SK-N-SH (cell line): ENCODE measurements at regions of chr20 and their contacts with region 1.

Region 1: DNA sequence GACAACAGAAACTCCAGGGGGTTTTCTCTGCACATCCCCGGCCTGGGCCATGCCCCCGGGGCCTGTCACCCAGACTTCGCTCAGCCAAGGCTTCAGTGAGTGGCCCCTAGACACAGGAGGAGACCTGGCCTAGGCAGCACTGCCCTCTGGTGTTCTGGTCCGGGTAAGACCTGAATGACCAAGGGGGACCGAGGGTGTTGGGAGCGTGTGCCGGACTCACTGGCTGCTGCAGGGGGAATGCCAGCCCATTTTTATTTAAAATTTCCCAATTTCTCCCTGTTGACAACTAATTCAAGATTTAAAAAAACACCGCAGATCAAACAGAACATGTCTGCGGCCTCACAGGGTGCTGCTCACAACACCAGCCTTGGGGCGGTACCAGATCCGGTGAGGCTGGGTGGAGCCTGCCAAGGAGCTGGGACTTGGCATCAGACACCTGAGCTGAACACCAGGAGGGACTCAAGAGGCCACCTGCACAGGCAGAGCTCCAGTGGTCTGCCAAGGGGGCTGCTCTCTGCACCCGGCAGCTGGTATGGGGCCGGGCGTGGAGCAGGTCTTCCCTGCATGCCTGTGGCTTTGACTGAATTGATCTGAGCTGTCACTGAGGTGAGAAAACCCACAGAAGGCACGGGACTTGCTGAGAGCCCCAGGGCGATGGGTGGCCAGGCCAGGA is 47.8 kb downstream of the DSTN start:
- DNase-seq: peak; percentile 91
- H3K4me3 ChIP-seq: no peak overlapping the region
- H3K27ac ChIP-seq: no peak overlapping the region
- H3K4me1 ChIP-seq: no peaks in the 10 kb centered on the region
- H3K27me3 ChIP-seq: no peaks in the 10 kb centered on the region
- CTCF ChIP-seq: peak; percentile 72
- EP300 ChIP-seq: no peak
- RAD21 ChIP-seq: peak; percentile 92

Region 2: DNA sequence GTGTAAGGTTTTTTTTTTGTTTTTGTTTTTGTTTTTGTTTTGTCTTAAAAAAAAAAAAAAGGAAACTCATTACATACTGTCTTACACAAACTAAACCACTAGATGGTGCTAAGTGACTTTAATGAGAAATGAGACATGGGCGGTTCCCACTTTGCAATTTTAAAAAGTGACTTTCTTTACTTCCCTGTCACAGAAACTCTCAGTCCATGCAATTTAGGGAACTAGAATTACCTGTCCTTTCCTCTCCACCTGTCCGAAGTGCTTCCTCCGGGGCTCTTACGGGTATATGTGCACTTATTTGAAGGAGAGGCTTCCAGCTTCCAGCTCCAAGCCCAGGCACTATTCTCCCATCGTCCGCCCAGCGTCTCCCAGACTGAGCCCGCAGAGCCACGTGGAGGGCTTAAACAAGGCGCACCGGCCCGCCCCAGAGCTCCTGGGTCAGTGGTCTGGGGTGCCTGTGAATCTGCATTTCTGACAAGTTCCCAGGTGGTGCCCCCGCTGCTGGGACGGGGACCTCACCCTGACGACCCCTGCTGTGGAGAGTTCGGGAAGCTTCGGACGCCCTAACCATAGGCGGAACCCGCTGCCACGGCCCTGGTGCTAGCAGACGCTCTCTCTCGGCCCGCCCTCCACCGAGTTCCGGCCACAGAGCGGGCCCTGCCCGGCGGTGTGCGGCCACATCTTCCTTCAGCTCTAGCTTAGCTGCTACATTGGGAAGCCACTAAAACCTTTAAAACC is 112.6 kb before region 1 on chr20:
- CTCF ChIA-PET with region 1: interaction called, 36 read pairs
- POLR2A ChIA-PET with region 1: no interaction called
- DNase-seq: peak; percentile 59
- H3K4me3 ChIP-seq: peak overlapping the region; percentile 35 to 52
- H3K27ac ChIP-seq: no peak overlapping the region
- H3K4me1 ChIP-seq: peaks cover 0 to 9% of the 10 kb centered on the region in 2 experiments; a peak in 1 of 4 replicates
- H3K27me3 ChIP-seq: no peaks in the 10 kb centered on the region
- CTCF ChIP-seq: peak; percentile 71
- EP300 ChIP-seq: no peak
- RAD21 ChIP-seq: peak; percentile 83

Region 3: GRCh38 chr20:17536944-17537444 is 80.7 kb before region 1 on chr20:
- CTCF ChIA-PET with region 1: interaction called, 96 read pairs
- POLR2A ChIA-PET with region 1: no interaction called
- DNase-seq: peak; percentile 78
- H3K4me3 ChIP-seq: no peak overlapping the region; a peak in 1 of 4 replicates
- H3K27ac ChIP-seq: no peak overlapping the region
- H3K4me1 ChIP-seq: peaks cover 0 to 12% of the 10 kb centered on the region in 2 experiments; a peak in 3 of 4 replicates
- H3K27me3 ChIP-seq: no peaks in the 10 kb centered on the region
- CTCF ChIP-seq: peak; percentile 91
- EP300 ChIP-seq: no peak
- RAD21 ChIP-seq: peak; percentile 98

Region 4: DNA sequence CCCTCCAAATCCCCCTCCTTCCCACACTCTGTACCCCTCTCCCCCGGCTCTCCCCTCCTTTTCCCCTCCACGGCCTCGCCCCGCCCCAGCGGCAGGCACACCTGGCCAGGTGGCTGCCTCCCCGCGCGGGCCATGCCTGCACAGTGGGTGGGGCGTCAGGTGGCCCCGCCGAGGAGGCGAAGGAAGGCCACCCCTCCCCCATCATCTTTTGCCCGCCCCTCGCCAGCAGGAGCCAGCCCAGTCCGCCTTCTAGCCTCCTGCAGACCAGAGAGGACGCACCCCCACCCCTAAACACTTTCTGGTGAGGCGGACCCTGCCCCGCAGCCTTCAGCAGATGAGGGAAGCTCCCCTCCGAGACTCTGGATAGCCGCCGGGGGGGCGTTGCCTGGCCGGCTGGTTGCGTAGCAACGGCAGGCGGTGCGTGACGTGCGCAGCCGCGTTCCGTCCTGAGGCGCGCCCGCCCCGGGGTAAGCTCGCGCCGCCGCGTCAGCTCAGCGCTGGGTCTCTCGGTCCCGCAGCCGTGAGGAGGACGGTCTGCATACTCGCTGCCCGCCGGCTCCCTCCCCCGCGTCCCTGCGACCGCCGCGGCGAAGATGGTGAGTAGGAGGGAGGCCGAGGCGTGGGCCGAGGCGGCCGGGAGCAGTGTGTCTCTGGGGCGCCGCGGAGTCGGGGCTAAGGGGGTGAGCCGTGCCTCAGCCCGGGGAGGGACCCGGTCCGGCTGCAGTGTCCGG is 47.9 kb before region 1 on chr20 and contains the start of gene DSTN:
- CTCF ChIA-PET with region 1: interaction called, 16 read pairs
- POLR2A ChIA-PET with region 1: no interaction called
- DNase-seq: peak; percentile 94
- H3K4me3 ChIP-seq: peak within 1 kb of the TSS; percentile 92 to 97
- H3K27ac ChIP-seq: peak within 1 kb of the TSS; percentile 93 to 99
- H3K4me1 ChIP-seq: peaks cover 3 to 10% of the 10 kb centered on the region in 2 experiments; a peak in 3 of 4 replicates
- H3K27me3 ChIP-seq: no peaks in the 10 kb centered on the region
- CTCF ChIP-seq: no peak
- EP300 ChIP-seq: no peak
- RAD21 ChIP-seq: no peak
- polyA plus RNA-seq, gene DSTN: 151 and 167 TPM in 2 replicates

Region 5: GRCh38 chr20:17636523-17637412 is 19.1 kb after region 1 on chr20:
- CTCF ChIA-PET with region 1: interaction called, 23 read pairs
- POLR2A ChIA-PET with region 1: no interaction called
- DNase-seq: peak; percentile 91
- H3K4me3 ChIP-seq: no peak overlapping the region
- H3K27ac ChIP-seq: peak overlapping the region in 1 of 2 experiments; percentile 8; a peak in 1 of 4 replicates
- H3K4me1 ChIP-seq: peaks cover 0 to 20% of the 10 kb centered on the region in 2 experiments; a peak in 1 of 4 replicates
- H3K27me3 ChIP-seq: no peaks in the 10 kb centered on the region
- CTCF ChIP-seq: no peak
- EP300 ChIP-seq: no peak
- RAD21 ChIP-seq: peak; percentile 61